ENCODE measurements at regions of chr9 and their contacts with region 1.

Region 1: GRCh38 chr9:18255158-18255629 is 218.8 kb upstream of the ADAMTSL1 start:
- DNase-seq: peak; percentile 87
- ATAC-seq: peak; percentile 77
- H3K4me3 Mint-ChIP-seq: no peak overlapping the region
- H3K27ac Mint-ChIP-seq: no peak overlapping the region
- H3K4me1 Mint-ChIP-seq: peaks cover 1% of the 10 kb centered on the region
- H3K27me3 Mint-ChIP-seq: peaks cover 18% of the 10 kb centered on the region

Region 2: DNA sequence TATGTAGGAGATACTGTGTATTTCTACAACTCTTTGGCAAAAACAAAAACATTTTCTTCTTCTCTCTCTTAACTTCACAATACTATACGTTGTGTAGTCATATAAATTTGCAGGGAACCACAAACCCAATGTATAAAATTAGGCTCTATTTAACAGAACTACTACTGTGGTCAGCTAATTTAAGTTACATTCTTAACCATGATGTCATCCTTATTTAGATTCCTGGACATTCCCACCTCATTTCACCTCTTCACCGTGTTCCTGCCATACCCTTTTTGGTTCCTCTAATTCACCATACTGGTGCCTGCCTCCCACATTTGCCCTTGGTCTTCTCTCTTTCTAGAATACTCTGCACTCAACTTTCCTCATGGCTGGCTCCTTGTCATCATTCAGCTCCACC is 752.0 kb before region 1 on chr9:
- CTCF ChIA-PET with region 1: no interaction called
- POLR2A ChIA-PET with region 1: no interaction called
- intact Hi-C with region 1: no loop called
- DNase-seq: no peak
- ATAC-seq: no peak
- H3K4me3 Mint-ChIP-seq: no peak overlapping the region
- H3K27ac Mint-ChIP-seq: no peak overlapping the region
- H3K4me1 Mint-ChIP-seq: no peaks in the 10 kb centered on the region
- H3K27me3 Mint-ChIP-seq: no peaks in the 10 kb centered on the region

Region 3: GRCh38 chr9:17744786-17745185 is 510.4 kb before region 1 on chr9:
- CTCF ChIA-PET with region 1: no interaction called
- POLR2A ChIA-PET with region 1: no interaction called
- intact Hi-C with region 1: no loop called
- DNase-seq: no peak
- ATAC-seq: no peak
- H3K4me3 Mint-ChIP-seq: no peak overlapping the region
- H3K27ac Mint-ChIP-seq: no peak overlapping the region
- H3K4me1 Mint-ChIP-seq: no peaks in the 10 kb centered on the region
- H3K27me3 Mint-ChIP-seq: no peaks in the 10 kb centered on the region

Region 4: GRCh38 chr9:18237776-18238175 is 17.4 kb before region 1 on chr9:
- CTCF ChIA-PET with region 1: interaction called, 16 read pairs
- POLR2A ChIA-PET with region 1: no interaction called
- intact Hi-C with region 1: no loop called
- DNase-seq: no peak
- ATAC-seq: no peak
- H3K4me3 Mint-ChIP-seq: no peak overlapping the region
- H3K27ac Mint-ChIP-seq: no peak overlapping the region
- H3K4me1 Mint-ChIP-seq: peaks cover 6% of the 10 kb centered on the region
- H3K27me3 Mint-ChIP-seq: peaks cover 6% of the 10 kb centered on the region

Region 5: GRCh38 chr9:18379073-18379811 is 124.0 kb after region 1 on chr9:
- CTCF ChIA-PET with region 1: no interaction called
- POLR2A ChIA-PET with region 1: no interaction called
- intact Hi-C with region 1: no loop called
- DNase-seq: no peak
- ATAC-seq: no peak
- H3K4me3 Mint-ChIP-seq: no peak overlapping the region
- H3K27ac Mint-ChIP-seq: no peak overlapping the region
- H3K4me1 Mint-ChIP-seq: no peaks in the 10 kb centered on the region
- H3K27me3 Mint-ChIP-seq: peaks cover 7% of the 10 kb centered on the region

Region 6: DNA sequence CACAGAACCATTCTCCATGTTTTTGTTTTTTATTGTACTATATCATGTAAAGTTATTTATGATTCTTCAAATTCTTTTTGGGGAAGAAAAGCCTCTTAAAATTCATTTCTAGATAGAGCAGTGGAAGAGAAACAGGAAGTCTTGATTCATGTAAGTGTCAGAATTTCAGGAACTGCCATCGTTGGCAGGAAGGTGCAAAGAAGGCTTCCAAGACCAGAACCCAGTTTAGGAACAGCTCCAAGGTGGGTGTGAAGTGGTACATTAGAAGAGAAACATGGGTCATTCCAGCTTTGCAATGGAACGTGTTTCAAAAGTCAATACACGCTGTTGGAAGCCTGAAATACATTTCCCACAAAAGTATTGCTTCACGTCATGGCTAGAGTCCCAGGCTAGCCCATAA is 763.0 kb after region 1 on chr9:
- CTCF ChIA-PET with region 1: no interaction called
- POLR2A ChIA-PET with region 1: no interaction called
- intact Hi-C with region 1: loop called in 1 of 2 experiments (anchors 5 kb)
- DNase-seq: no peak
- ATAC-seq: no peak
- H3K4me3 Mint-ChIP-seq: no peak overlapping the region
- H3K27ac Mint-ChIP-seq: no peak overlapping the region
- H3K4me1 Mint-ChIP-seq: peaks cover 3% of the 10 kb centered on the region
- H3K27me3 Mint-ChIP-seq: peaks cover 6% of the 10 kb centered on the region